ENCODE measurements at regions of chr2 and their contacts with region 1.

Region 1: DNA sequence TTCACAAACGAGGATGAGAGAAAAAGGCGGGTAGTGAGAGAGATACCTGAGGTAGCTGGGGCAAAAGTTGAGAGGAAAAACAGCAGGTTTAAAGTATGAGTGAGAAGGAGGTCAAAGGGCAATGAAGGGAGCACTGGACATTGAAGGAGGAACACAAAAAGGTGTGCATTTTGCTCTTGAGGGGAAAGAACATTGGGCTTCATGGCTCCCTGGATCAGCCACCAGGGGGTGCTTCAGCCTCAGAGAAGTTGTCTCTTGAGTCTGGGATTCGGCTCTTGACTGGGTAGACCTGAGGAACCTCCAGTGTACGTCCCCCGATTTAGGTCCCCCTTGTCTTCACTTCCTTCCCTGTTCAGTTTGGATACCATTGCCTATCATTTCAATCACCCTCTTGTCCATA is 128.5 kb downstream of the RAPGEF4 start:
- DNase-seq: peak; percentile 42 to 59
- ATAC-seq: peak in 5 of 8 donors; percentile 47 to 69 (median 53)
- H3K4me3 ChIP-seq: no peak overlapping the region
- H3K27ac ChIP-seq: no peak overlapping the region
- H3K4me1 ChIP-seq: peaks cover 6 to 54% (median 43%) of the 10 kb centered on the region in 9 donors
- H3K27me3 ChIP-seq: no peaks in the 10 kb centered on the region
- CTCF ChIP-seq: peak; percentile 19 to 74 (median 67)

Region 2: GRCh38 chr2:172555522-172556283 is 308.5 kb before region 1 on chr2 and contains the start of gene PDK1:
- intact Hi-C with region 1: no loop called
- DNase-seq: peak; percentile 85 to 91
- ATAC-seq: peak; percentile 96 to 98 (median 98)
- H3K4me3 ChIP-seq: peak within 1 kb of the TSS; percentile 82 to 92 (median 90)
- H3K27ac ChIP-seq: peak within 1 kb of the TSS; percentile 80 to 98 (median 94)
- H3K4me1 ChIP-seq: peaks cover 0 to 46% (median 22%) of the 10 kb centered on the region in 9 donors
- H3K27me3 ChIP-seq: no peaks in the 10 kb centered on the region
- CTCF ChIP-seq: no peak
- total RNA-seq, gene PDK1: 34.8 to 106 (median 54.3) TPM

Region 3: GRCh38 chr2:172813314-172813888 is 50.8 kb before region 1 on chr2:
- intact Hi-C with region 1: loop called in 4 of 10 experiments (anchors 5 kb)
- DNase-seq: peak in 1 of 2 donors; percentile 23
- ATAC-seq: peak in 7 of 8 donors; percentile 55 to 88 (median 67)
- H3K4me3 ChIP-seq: no peak overlapping the region
- H3K27ac ChIP-seq: no peak overlapping the region
- H3K4me1 ChIP-seq: peaks cover 0 to 5% (median 0%) of the 10 kb centered on the region in 9 donors
- H3K27me3 ChIP-seq: peaks cover 0 to 12% (median 0%) of the 10 kb centered on the region in 7 donors
- CTCF ChIP-seq: peak; percentile 29 to 79 (median 56)

Region 4: DNA sequence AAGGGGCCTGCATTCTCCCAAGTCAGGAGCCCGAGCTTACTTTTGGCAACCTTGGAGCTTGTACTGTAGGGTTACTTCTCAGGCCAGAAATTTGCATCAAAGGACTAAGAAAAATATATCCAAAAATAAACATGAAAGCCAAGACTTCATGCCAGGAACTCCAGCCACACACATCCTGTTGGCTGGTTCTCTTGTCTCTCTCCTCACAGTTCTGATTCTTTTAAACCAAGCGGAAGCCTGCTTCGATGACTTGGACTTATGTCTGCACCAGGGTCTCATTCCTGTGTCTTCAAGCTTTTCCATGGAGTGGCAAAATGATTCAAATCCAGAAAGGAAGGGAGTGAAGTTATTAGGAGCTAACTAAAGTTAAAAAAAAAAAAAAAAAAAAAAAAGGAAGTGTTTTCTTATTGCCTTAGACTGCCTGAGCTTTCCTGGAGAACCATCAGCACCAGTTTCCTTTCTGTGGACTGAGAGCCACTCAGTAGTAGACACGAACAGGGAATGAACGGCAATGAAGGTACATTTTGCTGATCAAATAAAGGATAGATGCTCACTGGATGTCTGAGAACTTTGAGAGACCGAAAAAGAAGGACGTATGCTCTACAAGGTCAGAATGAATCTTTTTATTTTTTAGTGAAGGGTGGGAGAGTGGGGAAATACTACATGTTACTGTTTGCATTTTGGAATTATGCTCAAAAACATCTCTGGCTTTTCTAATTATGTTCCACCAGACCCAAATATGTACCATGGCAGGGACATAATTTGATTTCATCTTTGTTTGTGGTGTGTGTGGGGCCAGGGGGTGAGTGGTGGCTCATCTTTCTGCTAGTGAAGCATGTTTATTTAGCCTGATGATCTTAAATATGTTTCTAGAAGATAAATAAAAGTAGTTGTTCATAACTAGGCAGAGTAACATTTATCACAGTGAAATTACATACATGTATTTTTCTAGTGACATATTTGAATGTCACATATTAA is 42.5 kb before region 1 on chr2:
- intact Hi-C with region 1: loop called in 1 of 10 experiments (anchors 5 kb)
- DNase-seq: peak in 1 of 2 donors; percentile 37
- ATAC-seq: peak; percentile 59 to 86 (median 72)
- H3K4me3 ChIP-seq: peak overlapping the region in 9 of 10 donors; percentile 16 to 53 (median 41)
- H3K27ac ChIP-seq: peak overlapping the region in 8 of 10 donors; percentile 55 to 85 (median 63)
- H3K4me1 ChIP-seq: peaks cover 0 to 24% (median 10%) of the 10 kb centered on the region in 9 donors
- H3K27me3 ChIP-seq: no peaks in the 10 kb centered on the region
- CTCF ChIP-seq: no peak

Region 5: GRCh38 chr2:172931918-172932520 is 67.8 kb after region 1 on chr2:
- intact Hi-C with region 1: loop called (anchors 1 to 5 kb)
- DNase-seq: peak; percentile 52 to 79
- ATAC-seq: peak in 7 of 8 donors; percentile 30 to 75 (median 37)
- H3K4me3 ChIP-seq: peak overlapping the region in 6 of 10 donors; percentile 3 to 33 (median 26)
- H3K27ac ChIP-seq: peak overlapping the region in 9 of 10 donors; percentile 2 to 82 (median 63)
- H3K4me1 ChIP-seq: peaks cover 3 to 49% (median 40%) of the 10 kb centered on the region in 9 donors
- H3K27me3 ChIP-seq: no peaks in the 10 kb centered on the region
- CTCF ChIP-seq: peak; percentile 65 to 82 (median 74)

Region 6: DNA sequence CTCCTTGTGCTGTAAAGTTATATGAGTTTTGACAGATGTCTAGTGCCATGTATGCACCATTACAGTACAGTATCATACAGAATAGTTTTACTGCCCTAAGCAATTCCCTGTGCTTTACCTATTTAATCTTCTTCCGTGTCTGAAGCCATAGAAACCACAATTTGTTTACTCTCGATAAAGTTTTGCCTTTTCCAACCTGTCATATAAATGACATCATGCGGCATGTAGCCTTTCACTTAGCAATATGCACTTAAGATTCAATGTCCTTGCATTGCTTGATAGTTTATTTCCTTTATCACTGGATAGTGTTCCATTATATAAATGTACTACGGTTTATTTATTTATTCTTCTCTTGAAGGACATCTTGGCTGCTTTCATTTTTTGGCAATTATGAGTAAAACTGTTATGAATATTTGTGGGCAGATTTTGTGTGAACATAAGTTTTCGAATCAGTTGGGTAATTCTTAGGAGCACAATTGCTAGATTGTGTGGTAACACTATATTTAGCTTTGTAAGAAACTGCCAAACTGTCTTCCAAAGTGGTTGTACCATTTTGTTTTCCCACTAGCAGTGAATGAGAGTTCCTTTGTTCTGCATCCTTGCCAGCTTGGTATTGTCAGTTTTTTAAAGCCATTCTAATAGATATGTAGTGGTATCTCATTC is 74.7 kb after region 1 on chr2:
- intact Hi-C with region 1: loop called in 5 of 10 experiments (anchors 5 kb)
- DNase-seq: no peak
- ATAC-seq: no peak
- H3K4me3 ChIP-seq: no peak overlapping the region
- H3K27ac ChIP-seq: no peak overlapping the region
- H3K4me1 ChIP-seq: no peaks in the 10 kb centered on the region
- H3K27me3 ChIP-seq: no peaks in the 10 kb centered on the region
- CTCF ChIP-seq: no peak

Measured in heart right ventricle (tissue), 16 donors.